ENCODE measurements at regions of chr7 and their contacts with region 1.

Region 1: DNA sequence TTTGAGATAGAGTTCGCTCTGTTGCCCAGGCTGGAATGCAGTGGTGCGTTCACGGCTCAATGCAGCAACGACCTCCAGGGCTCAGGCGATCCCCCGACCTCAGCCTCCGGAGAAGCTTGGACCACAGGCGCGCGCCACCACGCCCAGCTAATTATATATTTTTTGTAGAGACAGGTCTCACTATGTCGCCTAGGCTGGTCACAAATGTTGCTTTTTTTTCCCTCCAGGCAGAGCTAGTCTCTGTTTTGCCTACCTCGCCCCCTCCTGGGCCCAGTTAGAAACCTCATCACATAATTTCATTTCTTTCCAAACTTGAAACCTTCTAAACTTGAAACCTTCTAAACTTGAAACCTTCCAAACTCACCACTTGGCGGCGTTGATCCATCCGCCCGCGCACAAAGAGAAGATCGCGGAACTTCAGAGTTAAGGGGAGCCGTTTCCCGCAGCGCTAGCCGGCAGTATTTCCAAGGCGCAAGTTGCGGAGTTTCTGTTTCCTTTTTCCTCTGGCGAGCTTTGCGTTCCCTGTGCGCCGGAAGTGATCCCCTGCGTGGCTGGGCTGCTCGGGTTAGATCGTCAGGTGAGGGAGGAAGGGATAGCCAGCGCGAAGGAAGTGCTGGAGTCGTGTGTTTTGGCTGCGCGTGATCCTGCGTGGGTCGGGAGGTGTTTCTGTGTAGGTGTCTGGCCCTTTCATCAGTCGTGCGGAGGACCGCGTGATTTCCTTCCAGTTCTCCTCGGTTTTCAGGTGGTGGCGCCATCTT is at the start of gene SSBP1:
- DNase-seq: peak; percentile 95
- ATAC-seq: peak; percentile 90
- H3K4me3 Mint-ChIP-seq: peak within 1 kb of the TSS; percentile 94
- H3K27ac Mint-ChIP-seq: peak within 1 kb of the TSS; percentile 99
- H3K4me1 Mint-ChIP-seq: peaks cover 31% of the 10 kb centered on the region
- H3K27me3 Mint-ChIP-seq: no peaks in the 10 kb centered on the region
- total RNA-seq, gene SSBP1: 138 to 140 TPM

Region 2: GRCh38 chr7:141014524-141015395 is 723.3 kb before region 1 on chr7 and contains the start of gene MRPS33:
- CTCF ChIA-PET with region 1: interaction called, 13 read pairs
- POLR2A ChIA-PET with region 1: interaction called, 5 read pairs
- DNase-seq: peak; percentile 97
- ATAC-seq: peak; percentile 98
- H3K4me3 Mint-ChIP-seq: peak within 1 kb of the TSS; percentile 99
- H3K27ac Mint-ChIP-seq: peak within 1 kb of the TSS; percentile 100
- H3K4me1 Mint-ChIP-seq: peaks cover 34% of the 10 kb centered on the region
- H3K27me3 Mint-ChIP-seq: peaks cover 18% of the 10 kb centered on the region
- total RNA-seq, gene MRPS33: 58.1 to 62.9 TPM

Region 3: DNA sequence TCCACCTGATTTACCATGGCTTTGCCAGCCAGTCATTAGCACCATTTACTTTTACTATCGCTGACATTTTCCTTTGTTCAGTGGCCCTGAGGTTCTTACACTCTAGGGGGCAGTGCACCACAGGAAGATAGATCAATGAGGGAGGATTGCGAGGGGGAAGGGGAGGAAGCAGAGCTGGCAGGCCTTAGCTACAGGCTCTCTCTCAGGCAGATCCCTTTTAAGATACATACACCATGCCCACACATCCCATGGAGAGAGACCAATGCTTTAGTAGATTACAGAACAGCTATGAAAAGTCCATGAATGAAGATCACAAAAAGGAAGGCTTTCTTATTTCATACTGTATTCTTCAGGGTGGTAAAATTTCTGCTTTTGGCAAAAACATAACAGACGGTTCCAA is 83.5 kb before region 1 on chr7:
- CTCF ChIA-PET with region 1: interaction called, 187 read pairs
- POLR2A ChIA-PET with region 1: interaction called, 10 read pairs
- DNase-seq: peak; percentile 78
- ATAC-seq: peak; percentile 89
- H3K4me3 Mint-ChIP-seq: no peak overlapping the region
- H3K27ac Mint-ChIP-seq: peak overlapping the region; percentile 17
- H3K4me1 Mint-ChIP-seq: peaks cover 6% of the 10 kb centered on the region
- H3K27me3 Mint-ChIP-seq: no peaks in the 10 kb centered on the region

Region 4: GRCh38 chr7:141701489-141702046 is 36.4 kb before region 1 on chr7:
- CTCF ChIA-PET with region 1: interaction called, 45 read pairs
- POLR2A ChIA-PET with region 1: interaction called, 40 read pairs
- DNase-seq: peak; percentile 86
- ATAC-seq: peak; percentile 90
- H3K4me3 Mint-ChIP-seq: peak overlapping the region; percentile 81
- H3K27ac Mint-ChIP-seq: peak overlapping the region; percentile 84
- H3K4me1 Mint-ChIP-seq: peaks cover 34% of the 10 kb centered on the region
- H3K27me3 Mint-ChIP-seq: peaks cover 20% of the 10 kb centered on the region

Region 5: GRCh38 chr7:141722529-141722928 is 15.5 kb before region 1 on chr7:
- CTCF ChIA-PET with region 1: interaction called, 25 read pairs
- POLR2A ChIA-PET with region 1: interaction called, 7 read pairs
- DNase-seq: no peak
- ATAC-seq: no peak
- H3K4me3 Mint-ChIP-seq: no peak overlapping the region
- H3K27ac Mint-ChIP-seq: no peak overlapping the region
- H3K4me1 Mint-ChIP-seq: peaks cover 3% of the 10 kb centered on the region
- H3K27me3 Mint-ChIP-seq: no peaks in the 10 kb centered on the region

Region 6: GRCh38 chr7:141992156-141992555 is 254.1 kb after region 1 on chr7:
- CTCF ChIA-PET with region 1: no interaction called
- POLR2A ChIA-PET with region 1: no interaction called
- DNase-seq: no peak
- ATAC-seq: no peak
- H3K4me3 Mint-ChIP-seq: no peak overlapping the region
- H3K27ac Mint-ChIP-seq: no peak overlapping the region
- H3K4me1 Mint-ChIP-seq: peaks cover 4% of the 10 kb centered on the region
- H3K27me3 Mint-ChIP-seq: no peaks in the 10 kb centered on the region

Measured in activated CD8-positive, alpha-beta T cell treated with anti-CD3 and anti-CD28 coated beads, Interleukin-2, amount 10 ng/mL, durations not matched to agents 7 days and 5 days (primary cell).